Tibial artery (tissue), 4 donors: ENCODE measurements at regions of chr4 and their contacts with region 1.

Region 1: DNA sequence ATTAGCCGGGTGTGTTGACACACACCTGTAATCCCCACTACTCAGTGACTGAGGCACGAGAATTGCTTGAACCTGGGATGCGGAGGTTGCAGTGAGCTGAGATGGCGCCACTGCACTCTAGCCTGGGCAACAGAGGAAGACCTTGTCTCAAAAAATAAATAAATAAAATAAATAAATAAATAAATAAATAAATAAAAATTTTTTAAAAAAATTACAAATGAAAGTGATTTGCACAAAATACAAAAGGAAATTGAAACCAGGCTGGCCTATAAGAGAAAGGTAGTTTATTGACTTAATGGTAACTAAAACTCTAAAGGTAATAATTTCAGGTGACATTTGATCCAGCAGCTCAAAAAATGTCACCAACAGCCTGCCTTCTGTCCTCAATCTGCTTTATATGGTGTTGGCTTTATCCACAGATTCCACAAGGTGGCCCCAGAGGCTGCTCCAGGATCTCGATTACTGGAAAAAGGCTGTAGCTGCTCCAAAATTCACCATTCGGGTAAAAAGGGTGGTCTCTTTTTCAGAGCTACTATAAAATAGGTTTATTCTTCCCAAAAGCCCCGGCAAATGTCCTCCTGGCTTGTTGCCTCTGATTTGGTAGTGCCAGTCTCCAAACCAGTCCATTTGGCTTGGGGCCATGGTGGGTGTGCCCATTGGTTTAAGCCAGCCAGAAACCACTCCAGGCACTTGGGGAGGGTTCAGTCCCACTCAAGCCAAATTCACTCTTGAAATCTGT is 61.4 kb upstream of the TRIM2 start:
- DNase-seq: peak; percentile 65 to 80
- H3K4me3 ChIP-seq: peak overlapping the region in 1 of 2 donors; percentile 21
- H3K27ac ChIP-seq: no peak overlapping the region
- H3K4me1 ChIP-seq: peaks cover 0 to 3% (median 1%) of the 10 kb centered on the region in 4 donors
- H3K27me3 ChIP-seq: no peaks in the 10 kb centered on the region
- CTCF ChIP-seq: peak; percentile 90 to 91

Region 2: DNA sequence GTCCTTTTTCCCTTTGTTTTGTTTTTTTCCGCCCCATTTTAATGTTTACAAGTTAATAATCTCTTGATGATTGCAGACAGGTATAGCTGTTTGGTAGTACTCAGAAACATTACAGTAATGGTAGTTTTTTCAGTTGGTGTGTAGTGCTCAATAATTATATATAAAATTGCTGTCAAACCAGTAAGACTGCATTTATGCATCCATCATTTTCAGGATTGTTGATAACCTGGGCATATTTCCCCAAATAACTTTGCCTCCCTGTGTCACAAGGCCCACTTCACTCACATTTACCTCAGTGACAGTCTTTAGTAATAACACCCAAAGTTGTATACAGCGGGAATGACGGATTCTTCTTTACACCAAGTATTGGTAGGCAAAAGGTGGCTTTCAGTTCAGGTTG is 347.0 kb before region 1 on chr4:
- intact Hi-C with region 1: no loop called
- DNase-seq: no peak
- H3K4me3 ChIP-seq: no peak overlapping the region
- H3K27ac ChIP-seq: no peak overlapping the region
- H3K4me1 ChIP-seq: peaks cover 0 to 11% (median 0%) of the 10 kb centered on the region in 4 donors
- H3K27me3 ChIP-seq: no peaks in the 10 kb centered on the region
- CTCF ChIP-seq: no peak

Region 3: GRCh38 chr4:153221783-153222706 is 79.2 kb after region 1 on chr4:
- intact Hi-C with region 1: loop called (anchors 10 kb)
- DNase-seq: peak; percentile 63 to 80
- H3K4me3 ChIP-seq: peak overlapping the region; percentile 69 to 75
- H3K27ac ChIP-seq: peak overlapping the region; percentile 85 to 96
- H3K4me1 ChIP-seq: peaks cover 0 to 20% (median 4%) of the 10 kb centered on the region in 4 donors
- H3K27me3 ChIP-seq: no peaks in the 10 kb centered on the region
- CTCF ChIP-seq: no peak

Region 4: DNA sequence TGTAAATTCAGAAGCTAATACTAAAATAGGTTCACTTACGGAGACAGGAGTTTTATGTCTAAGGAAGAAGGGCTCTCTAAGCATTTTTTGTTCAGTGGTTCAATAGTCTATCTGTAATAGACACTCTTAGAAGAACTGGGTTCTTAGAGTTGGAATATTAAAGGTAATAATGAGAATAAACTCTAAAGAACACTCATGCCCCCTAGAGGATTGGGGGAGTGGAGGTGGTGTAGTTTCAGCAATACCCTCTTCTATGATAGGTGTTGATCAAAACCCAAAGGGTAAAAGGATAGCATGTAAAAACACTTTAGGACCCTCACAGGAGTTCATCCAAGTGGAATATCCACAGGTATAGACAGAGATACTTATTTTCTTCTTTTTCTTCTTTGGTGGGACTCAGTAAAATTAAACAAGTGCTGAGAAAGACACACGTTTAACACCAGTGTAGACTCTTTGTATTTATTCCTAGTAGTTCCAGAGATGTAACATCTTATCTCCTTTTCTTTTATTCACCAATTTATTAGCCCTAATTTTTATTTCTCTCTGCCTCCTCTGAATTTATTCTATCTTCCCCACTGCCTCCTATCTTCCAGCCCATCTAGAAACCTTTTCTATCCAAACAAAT is 175.9 kb after region 1 on chr4:
- intact Hi-C with region 1: loop called (anchors 5 kb)
- DNase-seq: no peak
- H3K4me3 ChIP-seq: no peak overlapping the region
- H3K27ac ChIP-seq: no peak overlapping the region
- H3K4me1 ChIP-seq: no peaks in the 10 kb centered on the region
- H3K27me3 ChIP-seq: no peaks in the 10 kb centered on the region
- CTCF ChIP-seq: peak; percentile 59 to 64